A673 (cell line): ENCODE measurements at regions of chr19 and their contacts with region 1.

Region 1: GRCh38 chr19:4342615-4343369 is 570 bp upstream of the MPND start:
- DNase-seq: peak; percentile 100
- H3K4me3 ChIP-seq: peak overlapping the region; percentile 68
- H3K27ac ChIP-seq: peak overlapping the region; percentile 91
- H3K4me1 ChIP-seq: peaks cover 8% of the 10 kb centered on the region
- H3K27me3 ChIP-seq: no peaks in the 10 kb centered on the region
- CTCF ChIP-seq: peak; percentile 39

Region 2: GRCh38 chr19:3995627-3996026 is 347.2 kb before region 1 on chr19:
- CTCF ChIA-PET with region 1: no interaction called
- POLR2A ChIA-PET with region 1: interaction called, 11 read pairs
- intact Hi-C with region 1: no loop called
- DNase-seq: no peak
- H3K4me3 ChIP-seq: no peak overlapping the region
- H3K27ac ChIP-seq: no peak overlapping the region
- H3K4me1 ChIP-seq: no peaks in the 10 kb centered on the region
- H3K27me3 ChIP-seq: no peaks in the 10 kb centered on the region
- CTCF ChIP-seq: no peak

Region 3: DNA sequence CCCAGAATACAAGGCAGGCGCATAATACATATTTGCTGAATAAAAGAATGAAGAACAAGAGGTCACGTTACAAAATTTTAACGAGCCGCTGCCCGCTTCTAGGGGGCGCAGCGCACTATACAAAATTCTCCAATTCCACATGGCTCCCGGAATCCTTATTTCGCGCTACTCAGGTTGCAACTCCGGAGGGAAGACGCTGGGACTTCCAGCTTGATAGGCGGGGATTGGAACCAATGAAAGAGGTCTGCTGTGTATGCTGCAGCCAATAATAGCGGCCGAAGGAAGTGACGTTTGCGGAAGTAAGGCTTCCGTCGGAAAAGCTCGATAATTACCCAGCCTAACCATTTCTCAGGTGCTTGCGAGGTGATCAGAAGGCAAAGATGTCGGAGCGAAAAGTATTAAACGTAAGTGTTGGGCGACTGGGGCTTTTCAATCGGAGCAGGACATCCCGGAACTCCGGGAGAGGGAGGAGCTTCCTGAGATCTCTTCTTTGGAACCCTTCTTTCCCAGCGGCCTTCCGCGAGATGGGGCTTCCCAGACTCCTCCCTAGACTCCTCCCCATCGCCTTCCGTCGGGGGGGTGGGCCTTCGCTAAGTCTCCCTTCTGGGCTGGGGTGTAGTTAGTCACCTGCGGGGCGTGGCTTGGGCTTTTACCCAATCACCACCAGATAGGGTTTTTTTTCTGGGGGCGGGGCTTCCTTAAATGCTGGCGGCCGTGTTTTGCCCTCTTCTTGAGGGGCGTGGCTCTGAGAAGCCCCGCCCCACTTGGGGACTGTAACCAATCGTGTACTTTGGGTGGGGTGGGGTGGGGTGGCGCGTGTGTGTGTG is 95.8 kb before region 1 on chr19 and contains the start of gene YJU2:
- CTCF ChIA-PET with region 1: no interaction called
- POLR2A ChIA-PET with region 1: interaction called, 3 read pairs
- intact Hi-C with region 1: loop called (anchors 2 kb)
- DNase-seq: peak; percentile 100
- H3K4me3 ChIP-seq: peak within 1 kb of the TSS; percentile 56
- H3K27ac ChIP-seq: peak within 1 kb of the TSS; percentile 86
- H3K4me1 ChIP-seq: peaks cover 10% of the 10 kb centered on the region
- H3K27me3 ChIP-seq: no peaks in the 10 kb centered on the region
- CTCF ChIP-seq: peak; percentile 82
- total RNA-seq, gene YJU2: 33.3 and 34.7 TPM in 2 replicates

Region 4: GRCh38 chr19:5115771-5116202 is 773.0 kb after region 1 on chr19:
- CTCF ChIA-PET with region 1: no interaction called
- POLR2A ChIA-PET with region 1: no interaction called
- intact Hi-C with region 1: no loop called
- DNase-seq: no peak
- H3K4me3 ChIP-seq: no peak overlapping the region
- H3K27ac ChIP-seq: peak overlapping the region; percentile 30
- H3K4me1 ChIP-seq: peaks cover 18% of the 10 kb centered on the region
- H3K27me3 ChIP-seq: no peaks in the 10 kb centered on the region
- CTCF ChIP-seq: no peak